ENCODE measurements at regions of chr1 and their contacts with region 1.

Region 1: GRCh38 chr1:241611063-241611462 is 29.1 kb downstream of the CHML start:
- DNase-seq: no peak
- ATAC-seq: peak; percentile 71
- H3K4me3 Mint-ChIP-seq: no peak overlapping the region
- H3K27ac Mint-ChIP-seq: no peak overlapping the region
- H3K4me1 Mint-ChIP-seq: peaks cover 14% of the 10 kb centered on the region
- H3K27me3 Mint-ChIP-seq: no peaks in the 10 kb centered on the region

Region 2: GRCh38 chr1:241582921-241583331 is 28.1 kb before region 1 on chr1:
- CTCF ChIA-PET with region 1: interaction called, 11 read pairs
- POLR2A ChIA-PET with region 1: no interaction called
- intact Hi-C with region 1: no loop called
- DNase-seq: no peak
- ATAC-seq: no peak
- H3K4me3 Mint-ChIP-seq: no peak overlapping the region
- H3K27ac Mint-ChIP-seq: no peak overlapping the region
- H3K4me1 Mint-ChIP-seq: no peaks in the 10 kb centered on the region
- H3K27me3 Mint-ChIP-seq: peaks cover 8% of the 10 kb centered on the region

Region 3: GRCh38 chr1:241677201-241677600 is 66.1 kb after region 1 on chr1:
- CTCF ChIA-PET with region 1: interaction called, 3 read pairs
- POLR2A ChIA-PET with region 1: no interaction called
- intact Hi-C with region 1: loop called in 1 of 2 experiments (anchors 10 kb)
- DNase-seq: peak; percentile 28
- ATAC-seq: peak; percentile 97
- H3K4me3 Mint-ChIP-seq: peak overlapping the region; percentile 28
- H3K27ac Mint-ChIP-seq: peak overlapping the region; percentile 35
- H3K4me1 Mint-ChIP-seq: peaks cover 27% of the 10 kb centered on the region
- H3K27me3 Mint-ChIP-seq: peaks cover 6% of the 10 kb centered on the region

Region 4: DNA sequence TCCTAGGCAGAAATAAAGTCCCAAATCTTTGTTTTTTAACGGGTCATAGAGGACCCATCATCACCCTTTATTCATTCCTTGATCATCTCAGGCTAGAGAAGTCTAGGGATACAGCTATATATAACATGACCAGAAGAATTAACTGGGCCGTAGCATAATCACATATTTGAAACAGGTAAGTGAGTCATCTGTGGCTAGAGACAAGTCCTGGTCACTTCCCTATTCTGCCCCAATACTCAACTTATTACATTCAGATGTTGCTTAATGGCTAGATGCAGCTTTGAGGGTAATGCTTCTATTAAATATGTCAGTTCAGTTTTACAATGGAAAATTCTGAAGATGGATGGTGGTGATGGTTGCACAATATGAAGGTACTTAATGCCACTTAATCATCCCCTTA is 283.9 kb after region 1 on chr1:
- CTCF ChIA-PET with region 1: no interaction called
- POLR2A ChIA-PET with region 1: no interaction called
- intact Hi-C with region 1: loop called in 1 of 2 experiments (anchors 5 kb)
- DNase-seq: no peak
- ATAC-seq: no peak
- H3K4me3 Mint-ChIP-seq: no peak overlapping the region
- H3K27ac Mint-ChIP-seq: no peak overlapping the region
- H3K4me1 Mint-ChIP-seq: no peaks in the 10 kb centered on the region
- H3K27me3 Mint-ChIP-seq: no peaks in the 10 kb centered on the region

Region 5: DNA sequence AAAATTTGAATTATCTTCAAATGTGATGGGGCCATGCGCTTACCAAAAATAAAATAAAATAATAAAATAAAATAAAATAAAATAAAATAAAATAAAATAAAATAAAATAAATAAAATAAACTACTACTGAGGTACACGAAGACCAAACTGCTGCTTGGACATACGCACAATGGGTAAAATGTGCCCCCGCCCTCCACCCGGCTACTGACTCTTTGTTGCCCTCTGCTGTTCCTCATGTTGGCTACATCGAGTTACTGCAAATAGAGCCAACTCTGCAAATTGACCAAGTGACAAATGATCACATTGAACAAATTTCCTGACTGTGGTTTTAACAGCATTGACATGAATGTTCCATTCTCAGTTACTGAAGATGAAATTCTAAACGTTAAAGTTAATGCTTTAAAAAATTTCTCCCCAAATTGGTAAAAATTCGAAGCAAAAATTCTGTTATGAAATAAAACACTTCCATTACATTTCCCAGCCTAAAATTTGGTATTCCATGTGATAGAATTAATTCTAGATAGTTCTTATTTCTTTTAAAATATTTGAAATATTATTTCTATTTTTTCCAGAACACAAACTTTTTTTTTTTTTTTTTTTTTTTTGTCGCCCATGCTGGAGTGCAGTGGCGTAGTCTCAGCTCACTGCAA is 406.6 kb after region 1 on chr1:
- CTCF ChIA-PET with region 1: interaction called, 5 read pairs
- POLR2A ChIA-PET with region 1: no interaction called
- intact Hi-C with region 1: loop called (anchors 1 to 2 kb)
- DNase-seq: peak; percentile 54
- ATAC-seq: peak; percentile 63
- H3K4me3 Mint-ChIP-seq: no peak overlapping the region
- H3K27ac Mint-ChIP-seq: no peak overlapping the region
- H3K4me1 Mint-ChIP-seq: no peaks in the 10 kb centered on the region
- H3K27me3 Mint-ChIP-seq: no peaks in the 10 kb centered on the region

Measured in activated CD4-positive, alpha-beta T cell treated with anti-CD3 and anti-CD28 coated beads for 36 hours (primary cell).